PC-9 (cell line): ENCODE measurements at regions of chr2 and their contacts with region 1.

Region 1: GRCh38 chr2:162118559-162119031 is 33.5 kb downstream of the GCG start:
- DNase-seq: no peak
- H3K4me3 ChIP-seq: no peak overlapping the region
- H3K27ac ChIP-seq: peak overlapping the region; percentile 56
- H3K4me1 ChIP-seq: peaks cover 15% of the 10 kb centered on the region
- H3K27me3 ChIP-seq: no peaks in the 10 kb centered on the region
- CTCF ChIP-seq: no peak

Region 2: GRCh38 chr2:162029287-162029901 is 89.2 kb before region 1 on chr2:
- CTCF ChIA-PET with region 1: no interaction called
- POLR2A ChIA-PET with region 1: no interaction called
- intact Hi-C with region 1: loop called (anchors 1 kb)
- DNase-seq: peak in 1 of 2 experiments; percentile 40
- H3K4me3 ChIP-seq: no peak overlapping the region
- H3K27ac ChIP-seq: no peak overlapping the region
- H3K4me1 ChIP-seq: no peaks in the 10 kb centered on the region; the same call in 1 of the 2 replicates
- H3K27me3 ChIP-seq: no peaks in the 10 kb centered on the region
- CTCF ChIP-seq: no peak

Region 3: GRCh38 chr2:162073888-162074645 is 44.5 kb before region 1 on chr2 and contains the start of gene DPP4:
- CTCF ChIA-PET with region 1: no interaction called
- POLR2A ChIA-PET with region 1: no interaction called
- intact Hi-C with region 1: loop called (anchors 1 kb)
- DNase-seq: no peak
- H3K4me3 ChIP-seq: peak within 1 kb of the TSS; percentile 41; the same call in 1 of the 2 replicates
- H3K27ac ChIP-seq: no peak within 1 kb of the TSS
- H3K4me1 ChIP-seq: no peaks in the 10 kb centered on the region
- H3K27me3 ChIP-seq: no peaks in the 10 kb centered on the region
- CTCF ChIP-seq: no peak
- total RNA-seq, gene DPP4: 0.35 and 0.48 TPM in 2 replicates

Region 4: DNA sequence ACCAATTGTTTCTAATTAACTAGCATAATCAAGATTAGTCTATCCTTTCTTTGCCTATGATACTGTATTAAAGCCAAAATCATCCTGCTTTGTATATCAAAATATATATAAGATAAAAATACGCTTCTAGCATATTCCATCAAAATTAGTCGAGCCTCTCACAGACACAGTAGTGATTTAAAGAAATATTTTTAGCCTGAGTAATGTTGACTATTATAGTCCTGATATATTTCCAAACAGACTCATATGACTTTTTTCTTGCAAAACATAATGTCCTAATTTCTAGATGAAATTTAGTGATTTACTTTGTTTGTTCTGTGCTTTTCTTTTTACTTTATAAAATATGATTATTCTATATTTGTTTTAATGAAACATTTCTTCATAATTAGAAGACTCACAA is 93.8 kb after region 1 on chr2:
- CTCF ChIA-PET with region 1: no interaction called
- POLR2A ChIA-PET with region 1: no interaction called
- intact Hi-C with region 1: no loop called
- DNase-seq: no peak
- H3K4me3 ChIP-seq: no peak overlapping the region
- H3K27ac ChIP-seq: no peak overlapping the region
- H3K4me1 ChIP-seq: no peaks in the 10 kb centered on the region
- H3K27me3 ChIP-seq: no peaks in the 10 kb centered on the region
- CTCF ChIP-seq: no peak